ENCODE measurements at regions of chr17 and their contacts with region 1.

Region 1: GRCh38 chr17:30824356-30825145 is at the start of gene CRLF3:
- DNase-seq: peak; percentile 94 to 98
- ATAC-seq: peak; percentile 98
- H3K4me3 ChIP-seq: peak within 1 kb of the TSS; percentile 67
- H3K27ac ChIP-seq: peak within 1 kb of the TSS; percentile 88 to 97
- H3K4me1 ChIP-seq: peaks cover 23% of the 10 kb centered on the region
- CTCF ChIP-seq: peak; percentile 73
- EP300 ChIP-seq: no peak
- POLR2A ChIP-seq: peak; percentile 89
- RAD21 ChIP-seq: peak; percentile 33 to 60; a peak in 4 of 5 replicates
- polyA plus RNA-seq, gene CRLF3: 26.6 and 31.0 TPM in 2 replicates

Region 2: DNA sequence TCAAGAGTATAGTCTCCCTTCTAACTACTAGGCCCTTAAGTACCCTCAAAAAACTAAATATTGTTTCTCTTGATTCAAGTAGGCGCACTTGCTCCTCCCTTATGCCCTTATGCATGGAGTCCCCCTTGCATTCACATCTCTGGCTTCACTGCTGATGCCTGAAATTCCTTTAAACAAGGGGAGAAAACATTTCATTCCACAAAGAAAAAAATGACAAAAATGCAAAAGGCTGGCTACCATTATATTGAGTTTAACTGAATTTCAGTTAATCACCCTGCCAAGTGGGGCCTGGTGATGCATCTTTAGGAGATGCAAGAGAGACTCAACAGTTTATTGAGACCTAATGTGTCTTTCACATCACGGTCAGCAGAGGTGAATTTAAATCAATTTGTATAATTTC is 35.6 kb before region 1 on chr17:
- CTCF ChIA-PET with region 1: interaction called, 10 read pairs
- POLR2A ChIA-PET with region 1: no interaction called
- DNase-seq: no peak
- ATAC-seq: no peak
- H3K4me3 ChIP-seq: no peak overlapping the region
- H3K27ac ChIP-seq: no peak overlapping the region
- H3K4me1 ChIP-seq: peaks cover 19% of the 10 kb centered on the region; the same call in 2 of the 3 replicates
- CTCF ChIP-seq: no peak
- EP300 ChIP-seq: no peak
- POLR2A ChIP-seq: no peak
- RAD21 ChIP-seq: no peak

Region 3: GRCh38 chr17:30808785-30809286 is 15.7 kb before region 1 on chr17:
- CTCF ChIA-PET with region 1: interaction called, 28 read pairs
- POLR2A ChIA-PET with region 1: interaction called, 3 read pairs
- DNase-seq: no peak
- ATAC-seq: no peak
- H3K4me3 ChIP-seq: no peak overlapping the region
- H3K27ac ChIP-seq: no peak overlapping the region
- H3K4me1 ChIP-seq: no peaks in the 10 kb centered on the region
- CTCF ChIP-seq: no peak
- EP300 ChIP-seq: no peak
- POLR2A ChIP-seq: no peak
- RAD21 ChIP-seq: no peak

Region 4: GRCh38 chr17:30838202-30838807 is 13.8 kb after region 1 on chr17:
- CTCF ChIA-PET with region 1: interaction called, 43 read pairs
- POLR2A ChIA-PET with region 1: no interaction called
- DNase-seq: no peak
- ATAC-seq: no peak
- H3K4me3 ChIP-seq: no peak overlapping the region
- H3K27ac ChIP-seq: no peak overlapping the region
- H3K4me1 ChIP-seq: peaks cover 2% of the 10 kb centered on the region; the same call in 1 of the 3 replicates
- CTCF ChIP-seq: no peak
- EP300 ChIP-seq: no peak
- POLR2A ChIP-seq: no peak
- RAD21 ChIP-seq: no peak

Region 5: DNA sequence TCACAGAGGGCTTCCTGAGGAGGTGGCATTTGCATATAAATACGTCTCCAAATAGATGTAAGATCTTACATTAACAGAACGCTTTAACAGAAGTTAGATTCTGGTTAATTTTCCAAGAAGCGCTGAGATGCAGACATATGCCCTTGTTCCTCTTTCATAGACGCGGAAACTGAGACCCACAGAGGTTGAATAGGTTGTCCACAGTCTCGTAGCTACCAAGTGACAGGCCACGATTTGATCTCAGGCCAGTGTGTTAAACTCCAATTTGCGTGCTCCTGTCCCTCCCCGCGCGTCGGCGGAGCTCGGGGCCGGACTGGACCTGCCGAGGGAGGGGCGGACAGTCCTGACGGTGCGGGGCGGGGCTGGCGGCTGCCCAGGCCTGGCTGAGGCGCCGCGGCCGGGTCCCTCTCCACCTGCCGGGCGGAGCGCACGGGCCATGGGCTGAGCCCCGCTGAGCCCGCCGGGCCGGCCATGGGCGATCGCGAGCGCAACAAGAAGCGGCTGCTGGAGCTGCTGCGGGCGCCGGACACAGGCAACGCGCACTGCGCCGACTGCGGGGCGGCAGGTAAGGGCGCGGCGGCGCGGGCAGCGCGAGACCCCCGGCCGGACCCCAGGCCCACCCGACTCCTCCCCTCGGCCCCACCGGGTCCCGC is 97.1 kb after region 1 on chr17 and contains the start of gene ADAP2:
- CTCF ChIA-PET with region 1: no interaction called
- POLR2A ChIA-PET with region 1: no interaction called
- DNase-seq: peak; percentile 51 to 60
- ATAC-seq: peak; percentile 87 to 89
- H3K4me3 ChIP-seq: peak within 1 kb of the TSS; percentile 62
- H3K27ac ChIP-seq: peak within 1 kb of the TSS; percentile 67 to 85
- H3K4me1 ChIP-seq: 0 out of 3 replicates have a peak, but pooled peaks cover 5% of the 10 kb centered on the region
- CTCF ChIP-seq: no peak
- EP300 ChIP-seq: no peak
- POLR2A ChIP-seq: 0 out of 2 replicates have a peak, but pooled peaks have one; percentile 35
- RAD21 ChIP-seq: no peak
- polyA plus RNA-seq, gene ADAP2: 4.5 and 5.0 TPM in 2 replicates

Region 6: DNA sequence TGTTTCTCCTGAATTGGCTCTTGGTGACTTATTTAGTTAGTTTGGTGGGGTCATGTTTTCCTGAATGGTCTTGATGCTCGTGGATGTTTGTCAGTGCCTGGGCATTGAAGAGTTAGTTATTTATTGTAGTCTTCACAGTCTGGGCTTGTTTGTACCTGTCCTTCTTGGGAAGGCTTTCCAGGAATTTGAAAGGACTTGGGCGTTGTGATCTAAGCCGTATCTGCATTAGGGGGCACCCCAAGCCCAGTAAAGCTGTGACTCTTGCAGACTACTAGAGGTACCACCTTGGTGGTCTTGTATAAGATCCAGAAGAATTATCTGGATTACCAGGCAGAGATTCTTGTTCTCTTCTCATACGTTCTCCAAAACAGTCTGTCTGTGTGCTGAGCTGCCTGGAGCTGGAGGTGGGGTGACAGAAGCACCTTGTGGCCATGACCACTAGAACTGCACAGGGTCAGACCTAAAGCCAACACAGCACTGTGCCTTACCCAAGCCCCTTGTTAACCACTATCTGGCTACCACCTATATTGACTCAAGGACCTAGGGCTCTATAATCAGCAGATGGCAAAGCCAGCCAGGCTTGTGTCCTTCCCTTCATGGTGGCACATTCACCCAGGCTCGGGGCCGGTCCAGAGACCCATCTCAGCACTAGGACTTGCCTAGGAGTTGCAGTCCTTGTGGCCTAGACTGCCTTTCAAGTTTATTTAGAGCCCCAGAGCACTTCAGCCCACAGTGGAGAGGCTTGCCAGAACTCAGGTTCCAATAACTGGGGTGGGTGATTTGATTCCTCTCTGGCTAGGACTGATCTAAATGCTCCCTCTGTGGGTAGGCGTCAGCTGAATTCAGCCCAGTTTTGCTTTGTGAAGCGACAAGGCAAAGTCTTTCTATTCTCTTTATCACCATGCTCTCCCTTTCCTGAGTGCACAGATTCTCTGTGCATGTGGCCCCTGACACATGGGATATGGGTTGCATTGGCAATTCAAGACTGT is 157.3 kb after region 1 on chr17:
- CTCF ChIA-PET with region 1: no interaction called
- POLR2A ChIA-PET with region 1: no interaction called
- DNase-seq: no peak
- ATAC-seq: peak; percentile 70 to 80
- H3K4me3 ChIP-seq: no peak overlapping the region
- H3K27ac ChIP-seq: no peak overlapping the region
- H3K4me1 ChIP-seq: peaks cover 6% of the 10 kb centered on the region; the same call in 2 of the 3 replicates
- CTCF ChIP-seq: no peak
- EP300 ChIP-seq: no peak
- POLR2A ChIP-seq: no peak
- RAD21 ChIP-seq: peak in 1 of 2 experiments; percentile 7; a peak in 1 of 5 replicates